Pancreas (tissue), 10 donors: ENCODE measurements at regions of chr14 and their contacts with region 1.

Region 1: DNA sequence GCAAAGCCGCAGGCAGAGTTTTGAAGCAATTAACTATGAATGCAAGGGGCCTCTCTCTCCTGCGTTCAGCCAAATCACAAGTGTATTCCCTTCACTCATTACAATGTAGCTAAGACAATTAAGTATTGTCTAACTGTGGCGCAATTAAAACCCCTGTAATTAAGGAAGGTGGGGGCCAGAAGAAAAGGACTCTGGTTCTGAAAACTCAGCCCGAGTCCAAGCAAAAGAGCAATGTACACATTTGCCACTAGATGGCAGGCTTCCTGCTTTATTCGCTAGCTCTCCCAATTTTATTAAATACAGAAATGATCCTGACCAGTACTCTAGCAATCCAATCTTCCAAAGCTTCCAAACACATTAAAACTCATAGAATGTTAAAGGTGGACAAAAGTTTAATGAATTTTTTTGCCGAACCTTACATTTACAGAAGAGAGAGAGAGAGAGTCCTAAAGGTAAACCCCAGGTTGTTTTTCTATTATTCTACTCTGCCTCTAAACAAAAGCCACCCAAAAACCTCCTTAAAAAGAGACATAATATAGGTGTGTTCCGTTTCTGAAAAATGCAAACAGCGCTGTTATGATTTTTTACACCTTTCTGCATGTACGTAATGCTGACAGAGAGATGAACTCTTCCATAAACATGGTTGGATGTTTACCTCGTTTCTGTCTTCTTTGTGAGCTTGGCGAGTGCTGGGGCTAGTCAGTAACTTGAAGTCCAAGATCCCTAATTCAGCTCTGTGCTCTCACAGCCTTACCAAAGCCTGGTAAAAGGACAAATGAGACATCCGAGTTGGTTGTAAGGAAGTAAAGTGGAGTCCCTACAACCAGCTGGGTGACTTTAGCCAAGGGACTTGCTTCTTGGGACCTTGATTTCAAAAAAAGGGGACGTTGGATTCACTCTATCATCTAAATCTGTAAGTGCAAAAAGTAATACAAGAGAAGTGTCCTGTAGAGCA is 50.9 kb upstream of the VASH1 start:
- DNase-seq: peak in 1 of 6 donors; percentile 34
- ATAC-seq: peak; percentile 35 to 86 (median 78)
- H3K4me3 ChIP-seq: no peak overlapping the region
- H3K27ac ChIP-seq: no peak overlapping the region
- H3K4me1 ChIP-seq: no peaks in the 10 kb centered on the region
- H3K27me3 ChIP-seq: no peaks in the 10 kb centered on the region
- CTCF ChIP-seq: peak; percentile 65 to 81 (median 76)

Region 2: DNA sequence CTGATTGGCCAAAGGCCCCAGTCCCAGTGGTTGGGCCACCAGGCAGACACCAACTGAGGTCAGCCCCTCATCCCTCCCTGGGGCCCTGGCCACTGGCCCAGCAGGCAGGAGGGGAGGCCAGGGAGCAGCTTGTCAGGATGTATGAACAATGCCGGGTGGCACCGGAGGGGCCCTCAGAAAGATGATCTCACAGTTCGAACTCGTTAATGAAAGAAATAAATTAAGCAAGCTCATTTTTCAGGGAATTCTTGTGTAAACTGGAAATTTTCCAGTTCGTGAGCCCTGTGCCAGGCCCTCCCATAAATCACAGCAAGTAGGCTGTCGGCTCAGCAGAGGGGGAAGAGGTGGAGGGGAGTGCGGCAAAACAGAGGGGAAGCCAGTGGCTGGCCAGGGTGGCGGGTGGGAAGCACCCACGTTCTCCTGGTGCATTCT is 126.0 kb before region 1 on chr14:
- intact Hi-C with region 1: no loop called
- DNase-seq: peak; percentile 31 to 84 (median 70)
- ATAC-seq: peak; percentile 89 to 94 (median 91)
- H3K4me3 ChIP-seq: no peak overlapping the region
- H3K27ac ChIP-seq: peak overlapping the region in 3 of 4 donors; percentile 43 to 76 (median 68)
- H3K4me1 ChIP-seq: no peaks in the 10 kb centered on the region
- H3K27me3 ChIP-seq: no peaks in the 10 kb centered on the region
- CTCF ChIP-seq: no peak

Region 3: GRCh38 chr14:76761136-76761959 is 51.0 kb after region 1 on chr14 and contains the start of gene VASH1:
- intact Hi-C with region 1: no loop called
- DNase-seq: peak in 4 of 6 donors; percentile 48 to 84 (median 64)
- ATAC-seq: peak; percentile 61 to 85 (median 77)
- H3K4me3 ChIP-seq: peak within 1 kb of the TSS; percentile 52 to 85 (median 82)
- H3K27ac ChIP-seq: peak within 1 kb of the TSS in 3 of 4 donors; percentile 26 to 50 (median 33)
- H3K4me1 ChIP-seq: peaks cover 0 to 3% (median 0%) of the 10 kb centered on the region in 3 donors
- H3K27me3 ChIP-seq: no peaks in the 10 kb centered on the region
- CTCF ChIP-seq: no peak
- total RNA-seq, gene VASH1: 1.6 to 15.0 (median 2.6) TPM

Region 4: DNA sequence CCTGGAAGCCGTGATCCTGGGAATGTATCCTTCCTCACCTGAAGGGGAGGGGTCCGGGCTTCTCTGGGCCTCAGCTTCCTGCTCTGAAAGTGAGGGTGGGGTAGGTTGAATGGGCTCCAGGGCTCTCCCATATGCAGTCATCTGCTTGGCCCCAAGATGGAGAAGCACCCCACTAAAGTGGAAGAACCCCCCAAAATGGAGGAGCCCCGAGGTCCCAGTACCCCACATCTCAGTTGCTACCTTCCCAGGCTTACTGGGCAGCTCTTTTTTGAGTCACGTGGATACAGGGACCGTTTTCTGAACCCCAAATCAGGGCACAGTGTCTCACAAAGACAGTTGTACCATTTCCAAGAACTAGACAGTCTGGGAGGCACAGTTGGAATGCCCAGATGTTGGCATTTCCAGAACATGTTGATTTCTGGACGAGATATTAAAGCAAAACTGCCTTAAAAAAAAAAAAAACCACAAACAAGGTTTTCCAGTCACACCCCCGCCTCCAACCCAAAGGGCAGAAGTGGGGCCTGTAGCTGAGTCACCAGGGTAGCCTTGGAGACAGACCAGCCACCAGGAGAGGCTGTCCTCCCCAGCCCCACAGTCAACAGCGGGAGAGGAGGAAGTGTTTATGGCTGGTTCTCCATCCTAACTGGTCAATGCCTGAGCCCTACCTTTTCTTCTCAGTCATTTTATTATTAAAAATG is 63.0 kb after region 1 on chr14:
- intact Hi-C with region 1: loop called in 1 of 3 experiments (anchors 10 kb)
- DNase-seq: peak in 5 of 6 donors; percentile 27 to 79 (median 56)
- ATAC-seq: peak; percentile 62 to 92 (median 78)
- H3K4me3 ChIP-seq: no peak overlapping the region
- H3K27ac ChIP-seq: peak overlapping the region in 2 of 4 donors; percentile 60 to 62
- H3K4me1 ChIP-seq: peaks cover 0 to 12% (median 0%) of the 10 kb centered on the region in 3 donors
- H3K27me3 ChIP-seq: no peaks in the 10 kb centered on the region
- CTCF ChIP-seq: no peak

Region 5: GRCh38 chr14:76820700-76821099 is 110.4 kb after region 1 on chr14:
- intact Hi-C with region 1: no loop called
- DNase-seq: no peak
- ATAC-seq: no peak
- H3K4me3 ChIP-seq: no peak overlapping the region
- H3K27ac ChIP-seq: no peak overlapping the region
- H3K4me1 ChIP-seq: peaks cover 0 to 2% (median 0%) of the 10 kb centered on the region in 3 donors
- H3K27me3 ChIP-seq: no peaks in the 10 kb centered on the region
- CTCF ChIP-seq: no peak

Region 6: DNA sequence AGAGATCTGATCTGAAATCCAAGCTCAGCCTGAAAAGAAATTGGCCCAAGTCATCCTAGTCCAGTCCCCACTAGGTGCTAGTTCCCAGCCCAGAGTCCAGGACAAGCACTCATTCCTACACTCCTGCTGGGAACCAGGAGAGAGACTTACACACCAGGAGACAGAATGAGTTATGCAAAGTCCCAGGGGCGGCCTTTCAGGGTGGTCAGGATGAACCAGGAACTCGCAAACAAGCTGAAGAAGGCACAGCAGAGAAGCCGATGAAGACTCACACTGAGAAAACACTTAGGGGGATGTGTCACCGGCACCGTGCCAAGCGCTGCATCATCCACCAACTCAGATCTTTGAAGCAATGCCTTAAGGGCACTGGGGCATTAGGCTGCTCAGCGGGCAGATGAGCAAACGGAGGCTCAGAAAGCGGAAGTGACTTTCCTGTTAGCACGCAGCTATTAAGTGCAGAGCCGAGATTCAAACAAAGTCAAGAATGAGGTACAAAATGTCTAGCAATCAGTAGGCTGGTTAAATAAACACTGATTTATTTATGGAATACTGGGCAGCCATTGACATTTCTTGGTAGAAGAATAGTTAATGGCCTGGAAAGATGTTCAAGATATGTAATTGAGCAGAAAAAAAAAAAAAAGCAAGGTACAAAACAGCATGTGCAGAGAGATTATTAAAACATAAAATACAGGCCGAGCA is 194.6 kb after region 1 on chr14:
- intact Hi-C with region 1: no loop called
- DNase-seq: peak in 1 of 6 donors; percentile 24
- ATAC-seq: peak in 3 of 4 donors; percentile 70 to 82 (median 80)
- H3K4me3 ChIP-seq: no peak overlapping the region
- H3K27ac ChIP-seq: no peak overlapping the region
- H3K4me1 ChIP-seq: no peaks in the 10 kb centered on the region
- H3K27me3 ChIP-seq: no peaks in the 10 kb centered on the region
- CTCF ChIP-seq: no peak